OCI-LY7 (cell line): ENCODE measurements at regions of chr15 and their contacts with region 1.

Region 1: DNA sequence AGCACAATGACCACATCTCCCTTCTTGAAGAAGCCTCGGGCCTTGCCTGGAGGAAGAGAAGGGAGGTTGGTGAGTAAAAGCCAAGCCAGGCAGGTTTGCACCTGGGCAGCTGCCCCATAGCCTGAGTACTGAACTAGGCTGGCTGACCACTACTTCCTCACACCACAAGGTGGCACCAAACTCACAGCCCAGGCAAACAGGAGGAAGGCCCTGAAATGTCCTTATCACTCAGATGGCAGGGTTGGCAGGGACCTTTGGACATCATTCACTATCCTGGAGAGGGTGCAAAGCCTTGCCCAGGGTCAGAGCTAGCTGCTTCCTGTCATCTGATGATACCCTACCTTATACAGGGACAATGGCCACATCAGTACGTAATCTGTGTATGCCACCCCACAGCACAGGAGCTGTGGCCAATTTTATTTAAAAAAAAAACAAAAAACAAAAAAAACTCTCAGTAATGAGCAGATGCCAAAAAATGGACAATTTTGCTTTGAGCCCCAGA is 2.2 kb upstream of the GRAMD2A start:
- DNase-seq: peak; percentile 72
- H3K4me3 ChIP-seq: no peak overlapping the region
- H3K27ac ChIP-seq: no peak overlapping the region
- H3K4me1 ChIP-seq: peaks cover 10% of the 10 kb centered on the region
- CTCF ChIP-seq: peak; percentile 88

Region 2: DNA sequence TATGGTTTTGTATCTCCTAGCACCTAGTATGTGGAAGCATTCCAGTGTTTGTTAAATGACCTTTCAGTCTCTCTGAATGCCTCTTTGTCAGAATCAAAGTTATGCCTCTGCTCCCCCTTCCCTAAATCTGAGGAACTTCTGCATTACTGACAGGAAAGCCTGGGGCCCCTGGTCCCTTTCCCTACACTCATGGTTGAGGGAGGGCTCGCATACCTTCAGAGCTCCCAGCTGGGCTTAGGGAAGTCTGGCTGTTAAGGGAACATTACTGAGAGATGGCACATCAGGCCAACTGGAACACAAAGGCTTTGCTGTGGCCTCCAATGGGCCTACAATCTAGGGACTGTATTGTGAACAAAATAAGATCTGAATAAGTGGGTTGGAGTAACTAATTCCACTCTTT is 20.9 kb after region 1 on chr15:
- CTCF ChIA-PET with region 1: no interaction called
- POLR2A ChIA-PET with region 1: no interaction called
- intact Hi-C with region 1: no loop called
- DNase-seq: no peak
- H3K4me3 ChIP-seq: no peak overlapping the region
- H3K27ac ChIP-seq: no peak overlapping the region
- H3K4me1 ChIP-seq: peaks cover 29% of the 10 kb centered on the region
- CTCF ChIP-seq: no peak

Region 3: GRCh38 chr15:72252663-72253299 is 53.0 kb after region 1 on chr15:
- CTCF ChIA-PET with region 1: no interaction called
- POLR2A ChIA-PET with region 1: no interaction called
- intact Hi-C with region 1: loop called (anchors 5 kb)
- DNase-seq: no peak
- H3K4me3 ChIP-seq: no peak overlapping the region
- H3K27ac ChIP-seq: no peak overlapping the region
- H3K4me1 ChIP-seq: no peaks in the 10 kb centered on the region
- CTCF ChIP-seq: no peak

Region 4: DNA sequence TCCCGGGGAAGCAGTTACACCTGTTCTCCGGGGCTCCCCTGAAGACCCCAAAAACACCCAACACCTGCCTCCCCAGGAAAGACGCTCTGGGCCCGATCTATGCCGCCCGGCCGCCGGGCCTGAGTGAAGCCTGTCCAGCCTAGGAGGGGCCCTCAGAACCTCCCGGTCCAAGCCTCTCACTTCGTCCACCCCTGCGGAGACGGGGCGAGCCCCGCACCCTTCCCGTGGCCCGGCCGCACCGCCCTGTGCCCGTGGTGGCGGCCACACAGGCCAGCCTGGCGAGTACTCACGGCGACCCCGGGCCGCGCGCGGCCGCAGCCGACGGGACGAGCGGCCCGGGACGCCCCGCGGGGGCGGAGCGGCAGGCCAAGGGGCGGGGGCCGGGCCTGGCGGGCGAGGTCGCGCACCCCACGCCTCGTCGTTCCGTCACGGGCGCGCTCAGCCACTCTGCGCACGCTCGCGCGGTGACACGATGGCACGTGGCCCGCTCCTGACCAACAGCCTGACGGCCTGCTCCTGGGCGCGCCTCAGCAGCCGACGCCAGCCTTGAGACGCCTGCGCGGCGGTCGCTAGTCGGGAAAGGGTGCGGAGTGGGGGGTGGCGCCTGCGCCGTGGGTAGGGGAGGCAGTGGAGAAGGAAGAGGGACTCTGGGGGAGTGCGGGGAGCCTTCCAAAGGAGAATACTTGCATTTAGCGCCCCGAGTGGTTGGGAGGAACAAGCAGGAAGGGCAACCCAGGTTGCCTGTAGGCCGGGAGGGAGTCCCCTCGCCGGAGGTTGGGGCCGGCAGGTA is 72.6 kb after region 1 on chr15 and contains the start of gene PARP6:
- CTCF ChIA-PET with region 1: no interaction called
- POLR2A ChIA-PET with region 1: no interaction called
- intact Hi-C with region 1: loop called (anchors 5 kb)
- DNase-seq: peak; percentile 97
- H3K4me3 ChIP-seq: peak within 1 kb of the TSS; percentile 97
- H3K27ac ChIP-seq: peak within 1 kb of the TSS; percentile 42
- H3K4me1 ChIP-seq: peaks cover 25% of the 10 kb centered on the region
- CTCF ChIP-seq: peak; percentile 78
- total RNA-seq, gene PARP6: 53.6 and 58.3 TPM in 2 replicates

Region 5: DNA sequence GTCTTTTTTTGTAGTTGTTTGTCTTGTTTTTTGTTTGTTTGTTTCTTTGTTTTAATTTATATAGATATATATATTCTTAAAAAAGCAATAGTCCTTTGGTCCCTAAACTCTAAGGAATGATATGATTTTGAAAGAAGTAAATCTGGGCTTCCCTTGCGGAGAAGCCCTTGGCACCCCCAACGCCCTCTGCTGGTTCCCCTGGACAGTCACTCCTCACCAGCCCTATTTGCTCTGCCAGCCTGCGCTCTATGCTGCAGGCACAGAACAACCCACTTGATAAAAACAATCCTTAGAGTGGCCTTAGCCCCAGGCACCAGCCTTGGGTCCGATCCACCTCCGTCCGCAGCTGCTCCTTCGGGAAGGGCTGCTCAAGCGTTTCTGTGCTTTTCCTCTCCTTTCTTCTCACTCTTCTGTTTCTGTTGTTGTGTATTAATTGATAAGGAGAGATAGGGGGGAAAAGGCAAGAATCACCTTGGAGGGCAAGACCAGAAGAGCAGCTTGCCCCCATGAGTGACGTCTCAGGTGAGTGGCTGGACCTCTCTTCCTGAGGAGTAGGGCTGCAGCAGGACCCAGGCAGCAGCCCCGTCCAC is 86.3 kb after region 1 on chr15:
- CTCF ChIA-PET with region 1: no interaction called
- POLR2A ChIA-PET with region 1: no interaction called
- intact Hi-C with region 1: loop called (anchors 2 kb)
- DNase-seq: peak; percentile 57
- H3K4me3 ChIP-seq: no peak overlapping the region
- H3K27ac ChIP-seq: no peak overlapping the region
- H3K4me1 ChIP-seq: no peaks in the 10 kb centered on the region
- CTCF ChIP-seq: peak; percentile 83